Right ventricle myocardium inferior (tissue), 1 donor: ENCODE measurements at regions of chr10 and their contacts with region 1.

Region 1: GRCh38 chr10:84845624-84846261 is 517.4 kb downstream of the CCSER2 start:
- DNase-seq: no peak
- ATAC-seq: no peak

Region 2: DNA sequence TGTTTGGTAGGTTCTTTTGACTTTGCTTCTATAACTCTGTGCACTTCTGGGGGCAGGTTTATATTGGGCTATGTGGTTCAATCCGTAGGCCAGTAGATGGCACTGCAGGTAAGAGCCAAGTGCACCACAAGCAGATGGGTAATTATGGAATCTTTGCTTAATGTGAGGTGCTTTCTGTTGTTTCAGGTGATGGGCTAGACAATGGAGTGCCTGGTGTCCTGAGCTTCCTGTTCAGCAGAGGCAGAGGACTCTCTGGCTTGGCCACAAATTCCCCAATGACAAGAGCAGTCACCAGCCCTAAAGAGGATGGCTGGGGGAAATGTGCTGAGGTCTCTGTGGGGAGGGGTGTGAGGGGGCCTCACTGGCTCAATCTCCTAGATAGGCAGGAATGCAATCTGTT is 62.4 kb before region 1 on chr10:
- intact Hi-C with region 1: loop called (anchors 2 kb)
- DNase-seq: no peak
- ATAC-seq: peak; percentile 72

Region 3: DNA sequence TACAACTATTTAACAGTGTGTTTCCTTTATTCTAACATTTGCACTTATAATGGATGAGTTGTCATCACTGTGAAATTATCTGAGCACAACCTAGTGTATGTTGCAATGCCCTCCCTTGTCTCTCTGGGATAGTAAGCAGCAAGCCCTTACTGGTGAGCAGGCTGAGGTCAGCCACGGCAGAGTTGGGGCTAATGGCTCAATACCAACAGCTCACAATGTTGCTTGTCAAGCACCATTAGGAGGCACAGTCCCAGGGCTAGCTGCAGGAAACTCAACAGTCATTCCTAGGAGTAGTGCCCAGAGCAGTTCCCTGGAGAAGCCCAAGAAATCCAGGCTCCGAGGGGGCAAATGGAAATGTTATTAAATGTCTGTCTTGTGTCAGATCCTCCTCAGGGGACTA is 662.4 kb after region 1 on chr10:
- intact Hi-C with region 1: loop called (anchors 5 kb)
- DNase-seq: no peak
- ATAC-seq: no peak